ENCODE measurements at regions of chr1 and their contacts with region 1.

Region 1: GRCh38 chr1:219099307-219099706 is 74.4 kb upstream of the LYPLAL1 start:
- DNase-seq: no peak
- H3K4me3 ChIP-seq: no peak overlapping the region
- H3K4me3 Mint-ChIP-seq: no peak overlapping the region
- H3K27ac Mint-ChIP-seq: no peak overlapping the region
- H3K4me1 ChIP-seq: no peaks in the 10 kb centered on the region
- H3K4me1 Mint-ChIP-seq: no peaks in the 10 kb centered on the region
- H3K27me3 ChIP-seq: no peaks in the 10 kb centered on the region
- H3K27me3 Mint-ChIP-seq: no peaks in the 10 kb centered on the region
- CTCF ChIP-seq: no peak

Region 2: DNA sequence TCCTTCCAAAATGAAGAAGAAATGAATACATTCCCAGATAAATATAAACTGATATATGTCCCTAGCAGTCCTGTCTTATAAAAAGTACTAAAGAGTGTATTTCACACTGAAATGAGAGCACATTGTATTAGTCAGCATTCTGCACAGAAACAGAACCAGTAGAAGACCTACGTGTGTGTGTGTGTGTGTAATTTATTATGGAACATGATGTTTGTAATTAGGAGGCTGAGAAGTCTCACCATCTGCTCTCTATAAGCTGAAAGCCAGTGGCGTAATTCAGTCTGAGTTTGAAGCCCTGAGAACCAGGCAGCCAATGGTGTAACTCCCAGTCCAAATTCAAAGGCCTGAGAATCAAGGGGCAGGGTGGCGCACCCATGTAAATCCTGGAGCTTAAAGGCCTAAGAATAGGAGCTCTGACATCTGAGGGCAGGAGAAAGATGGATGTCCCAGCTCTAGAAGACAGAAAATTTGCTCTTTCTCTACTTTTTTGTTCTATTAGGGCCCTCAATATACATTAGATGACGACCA is 72.1 kb before region 1 on chr1:
- CTCF ChIA-PET with region 1: no interaction called
- POLR2A ChIA-PET with region 1: no interaction called
- intact Hi-C with region 1: no loop called
- DNase-seq: no peak
- H3K4me3 ChIP-seq: no peak overlapping the region
- H3K4me3 Mint-ChIP-seq: no peak overlapping the region
- H3K27ac Mint-ChIP-seq: no peak overlapping the region
- H3K4me1 ChIP-seq: no peaks in the 10 kb centered on the region
- H3K4me1 Mint-ChIP-seq: peaks cover 6% of the 10 kb centered on the region
- H3K27me3 ChIP-seq: no peaks in the 10 kb centered on the region
- H3K27me3 Mint-ChIP-seq: no peaks in the 10 kb centered on the region
- CTCF ChIP-seq: no peak

Region 3: GRCh38 chr1:219109424-219110018 is 10.2 kb after region 1 on chr1:
- CTCF ChIA-PET with region 1: no interaction called
- POLR2A ChIA-PET with region 1: interaction called, 10 read pairs
- intact Hi-C with region 1: no loop called
- DNase-seq: no peak
- H3K4me3 ChIP-seq: no peak overlapping the region
- H3K4me3 Mint-ChIP-seq: no peak overlapping the region
- H3K27ac Mint-ChIP-seq: no peak overlapping the region
- H3K4me1 ChIP-seq: no peaks in the 10 kb centered on the region
- H3K4me1 Mint-ChIP-seq: no peaks in the 10 kb centered on the region
- H3K27me3 ChIP-seq: no peaks in the 10 kb centered on the region
- H3K27me3 Mint-ChIP-seq: no peaks in the 10 kb centered on the region
- CTCF ChIP-seq: no peak

Measured in Caco-2 (cell line).